ENCODE measurements at regions of chr1 and their contacts with region 1.

Region 1: GRCh38 chr1:218345673-218346390 is 696 bp downstream of the TGFB2 start:
- DNase-seq: peak; percentile 37
- H3K4me3 Mint-ChIP-seq: no peak overlapping the region
- H3K27ac Mint-ChIP-seq: no peak overlapping the region
- H3K4me1 Mint-ChIP-seq: peaks cover 23% of the 10 kb centered on the region
- H3K27me3 Mint-ChIP-seq: peaks cover 34% of the 10 kb centered on the region

Region 2: GRCh38 chr1:218284934-218285635 is 60.7 kb before region 1 on chr1 and contains the start of gene RRP15:
- CTCF ChIA-PET with region 1: no interaction called
- POLR2A ChIA-PET with region 1: no interaction called
- intact Hi-C with region 1: loop called (anchors 5 kb)
- DNase-seq: peak; percentile 92
- H3K4me3 Mint-ChIP-seq: peak within 1 kb of the TSS; percentile 97
- H3K27ac Mint-ChIP-seq: peak within 1 kb of the TSS; percentile 80
- H3K4me1 Mint-ChIP-seq: peaks cover 25% of the 10 kb centered on the region
- H3K27me3 Mint-ChIP-seq: peaks cover 11% of the 10 kb centered on the region
- total RNA-seq, gene RRP15: 18.0 to 18.8 TPM

Region 3: GRCh38 chr1:218361298-218362065 is 15.7 kb after region 1 on chr1:
- CTCF ChIA-PET with region 1: no interaction called
- POLR2A ChIA-PET with region 1: no interaction called
- intact Hi-C with region 1: loop called (anchors 2 kb)
- DNase-seq: no peak
- H3K4me3 Mint-ChIP-seq: no peak overlapping the region
- H3K27ac Mint-ChIP-seq: no peak overlapping the region
- H3K4me1 Mint-ChIP-seq: no peaks in the 10 kb centered on the region
- H3K27me3 Mint-ChIP-seq: peaks cover 13% of the 10 kb centered on the region

Region 4: GRCh38 chr1:218499011-218499691 is 153.3 kb after region 1 on chr1:
- CTCF ChIA-PET with region 1: no interaction called
- POLR2A ChIA-PET with region 1: no interaction called
- intact Hi-C with region 1: no loop called
- DNase-seq: no peak
- H3K4me3 Mint-ChIP-seq: no peak overlapping the region
- H3K27ac Mint-ChIP-seq: no peak overlapping the region
- H3K4me1 Mint-ChIP-seq: no peaks in the 10 kb centered on the region
- H3K27me3 Mint-ChIP-seq: peaks cover 10% of the 10 kb centered on the region

Region 5: GRCh38 chr1:219566951-219567947 is 1221.4 kb after region 1 on chr1:
- CTCF ChIA-PET with region 1: interaction called, 3 read pairs
- POLR2A ChIA-PET with region 1: no interaction called
- intact Hi-C with region 1: loop called (anchors 10 kb)
- DNase-seq: no peak
- H3K4me3 Mint-ChIP-seq: no peak overlapping the region
- H3K27ac Mint-ChIP-seq: no peak overlapping the region
- H3K4me1 Mint-ChIP-seq: no peaks in the 10 kb centered on the region
- H3K27me3 Mint-ChIP-seq: no peaks in the 10 kb centered on the region

Measured in activated CD4-positive, alpha-beta memory T cell treated with anti-CD3 and anti-CD28 coated beads for 36 hours (primary cell).